GM18951 (cell line): ENCODE measurements at regions of chr4 and their contacts with region 1.

Region 1: GRCh38 chr4:85968945-85969819 is 390.7 kb downstream of the MAPK10 start:
- POLR2A ChIP-seq: no peak

Region 2: DNA sequence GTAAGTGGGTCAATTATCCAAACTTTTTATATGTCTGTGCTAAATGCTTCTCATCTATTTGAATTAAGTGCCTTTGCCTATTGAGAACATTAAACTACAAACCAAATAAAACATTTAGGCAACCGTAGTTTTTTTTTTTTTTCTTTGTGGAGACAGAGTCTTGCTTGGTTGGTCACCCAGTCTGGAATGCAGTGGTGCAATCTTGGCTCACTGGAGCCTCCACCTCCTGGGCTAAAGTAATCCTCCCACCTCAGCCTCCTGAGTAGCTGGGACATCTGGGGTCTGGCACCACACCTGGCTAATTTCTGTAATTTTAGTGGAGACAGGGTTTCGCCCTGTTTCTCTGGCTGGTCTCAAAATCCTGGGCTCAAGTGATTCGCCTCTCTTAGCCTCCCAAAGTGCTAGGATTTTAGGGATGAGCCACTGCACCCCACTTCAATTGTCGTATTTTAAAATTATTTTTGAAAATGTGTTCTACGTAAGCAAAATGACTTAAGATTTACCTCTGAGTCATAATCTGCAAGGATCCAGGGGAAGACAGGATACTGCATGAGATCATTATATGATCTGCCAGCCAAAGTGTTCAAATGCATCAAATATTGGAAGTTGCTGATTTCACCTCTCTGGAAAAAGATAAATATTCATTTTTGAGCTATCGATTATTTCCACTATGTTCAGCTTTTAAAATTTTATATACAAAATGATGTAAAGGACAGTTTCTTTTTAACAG is 1260.6 kb before region 1 on chr4:
- in situ Hi-C with region 1: no loop called
- POLR2A ChIP-seq: no peak

Region 3: GRCh38 chr4:85391589-85392410 is 577.4 kb before region 1 on chr4:
- in situ Hi-C with region 1: loop called (anchors 25 kb)
- POLR2A ChIP-seq: no peak

Region 4: DNA sequence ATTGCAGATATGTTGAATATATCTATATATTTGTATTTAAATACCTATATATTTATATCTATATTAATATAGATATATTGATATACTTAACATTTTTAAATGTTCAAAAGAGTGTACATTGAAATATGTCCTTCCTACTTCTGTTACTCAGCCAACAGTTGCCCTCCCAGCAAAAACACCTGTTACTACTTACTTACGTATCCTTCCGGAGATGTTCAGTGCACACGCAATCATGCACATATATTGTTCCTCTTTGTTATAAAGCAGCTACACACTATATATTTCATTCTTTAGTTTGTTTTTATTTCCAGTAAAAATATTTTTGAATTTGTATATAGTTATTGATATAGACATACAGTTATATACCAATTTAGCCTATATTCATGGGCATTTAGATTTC is 352.0 kb before region 1 on chr4:
- in situ Hi-C with region 1: no loop called
- POLR2A ChIP-seq: no peak